ENCODE measurements at regions of chr20 and their contacts with region 1.

Region 1: DNA sequence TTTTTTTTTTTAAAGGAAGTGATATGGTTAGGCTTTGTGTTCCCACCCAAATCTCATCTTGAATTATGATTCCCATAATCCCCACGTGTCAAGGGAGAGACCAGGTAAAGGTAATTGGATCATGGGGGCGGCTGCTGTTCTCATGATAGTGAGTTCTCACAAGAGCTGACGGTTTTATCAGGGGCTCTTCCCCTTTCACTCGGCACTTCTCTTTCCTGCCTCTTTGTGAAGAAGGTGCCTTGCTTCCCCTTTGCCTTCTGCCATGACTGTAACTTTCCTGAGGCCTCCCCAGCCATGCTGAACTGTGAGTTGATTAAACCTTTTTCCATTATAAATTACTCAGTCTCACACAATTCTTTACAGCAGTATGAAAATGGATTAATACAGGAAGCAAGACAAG is 64.3 kb downstream of the ZFP64 start:
- DNase-seq: no peak
- ATAC-seq: no peak
- H3K4me3 ChIP-seq: no peak overlapping the region
- H3K27ac ChIP-seq: no peak overlapping the region
- H3K4me1 ChIP-seq: no peaks in the 10 kb centered on the region
- H3K27me3 ChIP-seq: no peaks in the 10 kb centered on the region

Region 2: DNA sequence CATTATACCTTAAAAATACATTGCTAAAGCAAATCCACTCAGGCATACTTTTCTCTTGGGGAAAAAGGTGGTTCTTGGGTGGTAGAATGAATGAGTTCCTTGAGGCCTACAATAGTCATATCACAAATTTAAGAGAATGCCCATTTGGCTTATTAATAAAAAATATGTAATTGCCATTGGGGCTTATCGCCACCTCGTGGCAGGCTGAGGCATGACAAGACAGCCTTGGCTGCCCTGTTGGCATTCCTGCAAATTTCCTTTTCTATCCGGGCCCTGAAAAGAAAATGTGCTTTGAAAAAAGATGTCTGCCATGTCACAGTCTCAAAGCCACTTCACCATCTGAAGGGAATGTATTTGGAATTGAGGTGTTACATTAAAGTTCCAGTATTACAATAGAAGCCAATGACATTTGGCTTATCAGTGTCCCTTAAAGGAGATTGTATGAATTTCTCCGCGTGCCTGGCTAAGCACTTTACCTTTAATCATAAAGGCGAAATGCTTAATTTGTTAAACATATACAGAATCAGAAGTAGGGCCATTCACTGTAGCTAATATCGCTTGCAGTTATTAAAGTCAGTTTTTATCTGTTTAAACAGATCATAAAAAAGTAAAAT is 252.5 kb after region 1 on chr20:
- intact Hi-C with region 1: loop called in 1 of 4 experiments (anchors 5 kb)
- DNase-seq: peak; percentile 20 to 75 (median 74)
- ATAC-seq: no peak
- H3K4me3 ChIP-seq: no peak overlapping the region
- H3K27ac ChIP-seq: no peak overlapping the region
- H3K4me1 ChIP-seq: no peaks in the 10 kb centered on the region
- H3K27me3 ChIP-seq: no peaks in the 10 kb centered on the region

Measured in right cardiac atrium (tissue), 5 donors.